HEK293 (cell line): ENCODE measurements at regions of chr2 and their contacts with region 1.

Region 1: DNA sequence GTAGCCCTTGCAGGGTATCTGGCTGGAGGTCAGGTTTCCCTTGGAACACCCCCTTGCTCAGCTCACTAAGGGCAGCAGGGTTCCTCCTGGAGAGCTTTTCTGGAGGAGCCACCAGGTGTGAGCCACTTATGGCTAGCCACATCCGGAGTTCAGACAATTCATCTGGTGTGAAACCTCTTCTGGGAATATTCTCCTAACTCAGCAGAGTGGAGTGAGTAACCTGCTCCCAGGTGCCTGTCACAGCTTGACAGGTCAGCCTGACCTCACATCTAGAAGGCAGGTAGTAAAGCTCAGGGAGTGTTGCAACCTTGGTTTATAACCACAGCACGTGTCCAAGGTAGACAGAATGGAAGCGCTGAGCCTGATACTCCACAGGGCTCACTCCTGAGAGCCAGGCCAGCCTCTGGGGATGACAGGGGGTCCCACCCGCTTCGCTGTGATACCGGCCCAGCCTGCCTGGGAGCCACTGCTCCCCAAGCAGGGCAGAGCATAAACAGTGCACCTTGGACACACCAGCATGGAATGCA is 62.6 kb upstream of the TGFA start:
- H3K4me3 ChIP-seq: no peak overlapping the region
- H3K27ac ChIP-seq: no peak overlapping the region
- H3K4me1 ChIP-seq: no peaks in the 10 kb centered on the region
- CTCF ChIP-seq: no peak

Region 2: GRCh38 chr2:70340921-70341765 is 275.1 kb before region 1 on chr2:
- CTCF ChIA-PET with region 1: interaction called, 94 read pairs
- POLR2A ChIA-PET with region 1: no interaction called
- H3K4me3 ChIP-seq: no peak overlapping the region
- H3K27ac ChIP-seq: no peak overlapping the region
- H3K4me1 ChIP-seq: no peaks in the 10 kb centered on the region
- CTCF ChIP-seq: peak; percentile 88

Region 3: DNA sequence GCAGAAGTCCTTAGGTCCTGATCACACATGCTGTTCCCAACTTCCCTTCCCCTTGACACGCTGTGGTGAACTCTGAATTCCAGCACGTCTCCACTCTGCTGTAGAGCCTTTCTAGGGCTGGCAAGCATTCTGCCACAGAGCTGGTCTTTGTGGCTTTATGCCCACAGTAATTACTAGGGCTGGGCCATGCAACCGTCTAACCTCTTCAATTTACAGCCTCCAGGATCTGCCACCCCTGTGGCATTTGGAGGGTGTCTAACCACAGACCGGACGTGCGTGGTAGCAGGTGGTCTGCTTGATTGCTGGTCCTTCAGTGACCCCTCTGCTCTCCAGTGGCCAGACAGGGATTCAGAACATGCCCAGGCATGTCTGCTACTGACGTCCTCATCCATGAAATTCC is 19.5 kb before region 1 on chr2:
- CTCF ChIA-PET with region 1: interaction called, 12 read pairs
- POLR2A ChIA-PET with region 1: no interaction called
- H3K4me3 ChIP-seq: no peak overlapping the region
- H3K27ac ChIP-seq: peak overlapping the region; percentile 43; the same call in 1 of the 2 replicates
- H3K4me1 ChIP-seq: no peaks in the 10 kb centered on the region
- CTCF ChIP-seq: no peak

Region 4: GRCh38 chr2:70627211-70627902 is 11.1 kb after region 1 on chr2:
- CTCF ChIA-PET with region 1: interaction called, 15 read pairs
- POLR2A ChIA-PET with region 1: no interaction called
- H3K4me3 ChIP-seq: no peak overlapping the region
- H3K27ac ChIP-seq: no peak overlapping the region
- H3K4me1 ChIP-seq: no peaks in the 10 kb centered on the region
- CTCF ChIP-seq: no peak

Region 5: DNA sequence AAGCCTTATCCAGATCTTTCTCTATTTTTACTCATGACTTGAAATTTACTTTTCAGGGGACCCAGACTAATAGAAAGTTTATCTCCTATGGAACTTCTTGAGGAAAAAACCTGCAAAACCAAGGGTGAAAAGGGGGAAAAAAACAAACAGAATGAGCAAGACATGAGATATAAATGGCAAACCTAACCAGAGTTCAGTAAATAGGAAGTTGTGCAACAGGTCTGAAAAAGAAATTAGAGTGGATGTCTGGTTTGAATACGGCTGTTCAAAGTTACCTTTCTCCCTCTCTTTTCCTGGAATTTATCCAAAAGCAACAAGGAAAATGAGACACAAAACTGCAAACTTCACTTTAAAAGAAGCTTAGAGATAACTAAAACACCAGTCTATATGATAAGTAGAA is 16.2 kb after region 1 on chr2:
- CTCF ChIA-PET with region 1: interaction called, 15 read pairs
- POLR2A ChIA-PET with region 1: no interaction called
- H3K4me3 ChIP-seq: no peak overlapping the region
- H3K27ac ChIP-seq: no peak overlapping the region
- H3K4me1 ChIP-seq: no peaks in the 10 kb centered on the region
- CTCF ChIP-seq: no peak

Region 6: DNA sequence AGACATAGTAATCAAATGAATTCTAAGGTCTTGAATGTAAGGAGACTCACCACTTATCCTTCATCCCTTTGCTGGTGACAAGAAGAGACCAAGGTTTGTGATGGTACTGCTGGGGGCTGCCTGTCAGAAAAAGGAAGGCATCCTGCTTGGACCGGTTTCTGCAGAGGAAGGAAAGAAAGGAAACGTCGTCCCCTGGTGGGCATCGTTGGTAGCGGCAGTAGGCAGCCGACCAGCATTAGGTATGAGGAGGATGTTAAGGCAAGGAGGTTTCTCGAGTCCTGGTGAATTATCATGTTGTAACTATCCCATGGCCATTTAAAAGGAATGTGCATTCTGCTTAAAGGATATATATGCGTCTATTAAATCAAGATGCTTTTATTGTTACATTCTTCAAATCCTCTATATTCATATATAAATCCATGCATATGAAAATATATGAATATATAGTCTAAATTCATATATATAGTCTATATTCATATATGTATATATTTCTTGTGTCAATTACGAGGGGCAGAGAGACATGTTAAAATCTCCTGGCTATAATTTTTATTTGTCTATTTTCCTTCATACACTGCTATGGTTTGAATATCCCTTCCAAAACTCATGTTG is 31.7 kb after region 1 on chr2:
- CTCF ChIA-PET with region 1: interaction called, 32 read pairs
- POLR2A ChIA-PET with region 1: no interaction called
- H3K4me3 ChIP-seq: no peak overlapping the region
- H3K27ac ChIP-seq: no peak overlapping the region
- H3K4me1 ChIP-seq: no peaks in the 10 kb centered on the region
- CTCF ChIP-seq: peak; percentile 83